ENCODE measurements at regions of chr13 and their contacts with region 1.

Region 1: DNA sequence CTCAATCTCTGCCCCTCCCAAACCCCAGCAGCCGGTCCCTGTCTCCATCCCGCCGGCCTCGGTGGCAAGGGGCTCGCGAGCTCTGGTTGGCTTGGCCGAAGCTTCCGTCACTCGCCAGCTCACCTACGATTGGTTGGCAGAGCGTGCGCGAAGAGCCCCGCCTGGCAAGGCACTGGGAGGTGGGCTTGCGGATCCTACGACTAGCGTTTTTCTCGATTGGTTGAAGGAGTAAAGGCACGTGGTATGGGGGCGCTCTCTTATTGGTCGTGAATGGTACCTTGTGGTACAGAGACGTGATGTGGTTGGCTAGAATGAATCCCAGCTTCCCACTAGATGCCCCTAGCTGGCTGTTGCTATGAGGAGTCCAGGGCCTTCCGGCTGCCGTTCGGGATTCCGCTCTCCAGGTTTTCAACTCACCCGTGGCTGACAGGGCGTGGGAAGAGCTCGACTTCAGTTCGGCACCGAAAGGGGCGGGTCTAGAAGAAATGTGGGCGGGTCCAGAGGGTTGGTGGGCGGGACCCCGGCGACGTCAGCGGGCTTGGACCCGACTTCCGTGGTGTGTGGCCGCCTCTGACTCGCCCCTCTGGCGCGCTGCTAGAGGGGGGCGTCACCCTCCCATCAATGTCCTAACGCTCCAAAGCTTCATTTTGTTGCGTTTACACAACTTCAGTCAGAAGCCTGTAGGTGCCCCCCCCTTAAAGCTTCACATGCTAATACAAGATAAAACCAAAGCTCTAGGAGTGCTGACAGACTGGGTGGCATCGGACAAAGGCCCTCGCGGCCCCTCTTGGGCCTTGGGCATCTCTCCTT is 847 bp upstream of the RAP2A start:
- DNase-seq: peak; percentile 99
- H3K4me3 ChIP-seq: peak overlapping the region; percentile 87 to 97
- H3K27ac ChIP-seq: peak overlapping the region; percentile 100
- H3K4me1 ChIP-seq: peaks cover 0 to 15% of the 10 kb centered on the region in 2 donors
- H3K27me3 ChIP-seq: no peaks in the 10 kb centered on the region
- CTCF ChIP-seq: no peak

Region 2: DNA sequence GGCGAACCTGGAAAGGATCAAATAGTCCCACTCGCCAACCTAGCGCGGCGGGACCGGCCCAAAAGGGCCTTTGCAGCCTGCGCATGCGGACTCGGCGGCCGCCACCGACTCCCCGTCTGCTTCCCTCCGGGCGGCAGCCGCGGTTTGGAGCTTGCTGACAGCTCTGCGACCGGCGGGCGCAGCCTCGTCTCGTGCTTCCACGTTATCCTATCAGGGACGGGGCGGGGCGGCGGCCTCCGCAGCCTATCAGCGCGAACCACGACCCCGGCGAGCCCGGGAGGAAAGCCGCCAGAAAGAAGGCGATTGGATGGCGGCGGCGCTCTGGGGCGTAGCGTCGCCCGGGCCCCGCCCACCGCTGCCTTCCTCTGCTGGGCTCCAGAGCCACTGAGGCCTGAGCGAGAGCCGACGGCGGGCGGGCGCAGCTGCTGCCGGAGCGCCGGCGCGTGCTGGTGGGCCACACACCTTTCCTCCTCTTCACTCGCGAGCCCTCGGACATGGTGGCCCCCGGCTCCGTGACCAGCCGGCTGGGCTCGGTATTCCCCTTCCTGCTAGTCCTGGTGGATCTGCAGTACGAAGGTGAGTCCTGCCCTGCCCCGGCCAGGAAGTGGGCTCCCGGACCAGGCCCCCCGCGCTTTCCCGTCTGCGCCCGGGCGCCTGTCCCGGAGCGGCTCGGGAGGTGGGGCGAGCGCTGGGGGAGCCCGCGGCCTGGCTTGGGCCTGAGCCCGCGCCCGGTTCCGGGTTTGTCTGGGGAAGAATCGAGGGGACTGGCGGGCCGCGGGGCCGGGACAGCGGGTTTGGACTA is 1756.2 kb before region 1 on chr13 and contains the start of gene DNAJC3:
- intact Hi-C with region 1: loop called (anchors 2 kb)
- DNase-seq: peak; percentile 95 to 99
- H3K4me3 ChIP-seq: peak within 1 kb of the TSS; percentile 72 to 81
- H3K27ac ChIP-seq: peak within 1 kb of the TSS; percentile 98 to 99
- H3K4me1 ChIP-seq: peaks cover 0 to 20% of the 10 kb centered on the region in 2 donors
- H3K27me3 ChIP-seq: no peaks in the 10 kb centered on the region
- CTCF ChIP-seq: no peak
- total RNA-seq, gene DNAJC3: 44.3 TPM

Region 3: GRCh38 chr13:96880419-96880818 is 552.7 kb before region 1 on chr13:
- intact Hi-C with region 1: no loop called
- DNase-seq: no peak
- H3K4me3 ChIP-seq: no peak overlapping the region
- H3K27ac ChIP-seq: no peak overlapping the region
- H3K4me1 ChIP-seq: no peaks in the 10 kb centered on the region
- H3K27me3 ChIP-seq: no peaks in the 10 kb centered on the region
- CTCF ChIP-seq: no peak

Region 4: DNA sequence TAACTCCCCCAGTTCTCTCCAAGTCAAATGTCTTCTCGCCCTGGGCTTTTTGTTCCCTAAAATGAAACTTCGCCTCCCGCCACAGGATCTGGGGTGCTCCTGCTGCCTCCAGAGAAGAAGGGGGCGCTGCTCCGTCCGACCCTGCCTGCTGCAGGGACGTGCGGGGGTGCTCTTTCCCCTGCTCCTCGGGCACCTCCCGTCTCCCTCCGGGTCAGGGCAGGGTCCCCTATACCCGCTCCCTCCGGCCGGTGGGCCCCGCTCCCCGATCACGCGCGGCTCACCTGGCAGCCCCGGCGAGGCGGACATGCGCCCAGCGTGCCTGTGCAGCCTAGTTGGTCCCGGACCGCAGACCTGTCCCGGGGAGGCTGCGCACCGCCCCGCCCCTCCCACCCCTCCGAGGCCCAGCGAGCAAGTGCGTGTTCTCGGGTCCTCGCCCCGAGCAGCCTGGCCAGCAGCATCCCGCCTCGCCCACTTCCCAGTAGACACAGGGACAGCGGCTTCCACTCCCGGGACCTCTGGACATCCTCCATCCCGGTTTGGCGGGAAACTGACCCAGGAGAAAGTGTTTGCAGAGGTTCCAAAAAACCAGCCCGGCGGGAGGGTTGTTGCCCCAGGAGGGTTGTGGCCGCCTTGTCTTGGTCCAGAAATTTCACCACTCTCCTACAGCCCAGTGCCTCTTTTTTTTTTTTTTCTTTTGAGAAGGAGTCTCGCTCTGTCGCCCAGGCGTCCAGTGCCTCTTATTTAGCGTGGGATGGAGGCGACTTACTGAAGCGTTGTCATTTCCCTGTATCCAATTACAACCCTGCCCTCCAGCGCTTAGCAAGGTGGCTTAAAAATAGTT is 438.9 kb before region 1 on chr13 and contains the start of gene OXGR1:
- intact Hi-C with region 1: no loop called
- DNase-seq: no peak
- H3K4me3 ChIP-seq: peak within 1 kb of the TSS; percentile 54 to 58
- H3K27ac ChIP-seq: no peak within 1 kb of the TSS
- H3K4me1 ChIP-seq: peaks cover 3 to 4% of the 10 kb centered on the region in 2 donors
- H3K27me3 ChIP-seq: no peaks in the 10 kb centered on the region
- CTCF ChIP-seq: no peak
- total RNA-seq, gene OXGR1: not detected

Region 5: DNA sequence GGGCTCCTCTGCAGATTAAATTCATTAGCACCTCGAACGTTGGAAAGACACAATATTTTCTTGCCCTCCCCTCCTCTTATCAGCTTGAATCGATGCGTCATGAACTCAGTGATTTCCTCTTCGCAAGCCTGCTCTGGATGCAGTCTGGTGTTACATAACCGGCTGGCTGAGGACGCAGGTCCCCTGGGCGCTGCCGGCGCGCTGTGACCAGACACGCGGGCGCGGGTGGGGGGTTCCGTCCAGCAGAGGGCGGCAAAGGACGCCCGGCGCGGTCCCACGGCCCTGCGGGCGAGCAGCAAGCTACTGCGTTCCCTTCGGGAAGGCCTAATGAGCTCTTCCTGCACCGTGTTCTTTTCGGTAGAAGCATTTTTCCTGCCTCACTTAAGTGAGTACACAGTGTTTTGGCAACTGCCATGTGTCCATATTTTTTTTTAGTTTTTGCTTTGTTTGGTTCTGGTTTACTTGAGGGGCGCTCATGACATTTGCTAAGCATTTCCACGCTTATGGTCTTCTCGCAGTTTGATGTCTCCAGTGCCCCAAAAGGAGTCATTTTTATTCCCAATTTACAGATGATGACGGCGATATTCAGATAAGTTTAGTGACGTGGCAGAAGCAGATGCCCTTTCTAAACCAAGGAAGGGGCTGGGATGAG is 323.2 kb before region 1 on chr13:
- intact Hi-C with region 1: loop called (anchors 2 kb)
- DNase-seq: peak; percentile 66 to 96
- H3K4me3 ChIP-seq: peak overlapping the region in 1 of 2 donors; percentile 42
- H3K27ac ChIP-seq: peak overlapping the region; percentile 63 to 69
- H3K4me1 ChIP-seq: peaks cover 8 to 70% of the 10 kb centered on the region in 2 donors
- H3K27me3 ChIP-seq: no peaks in the 10 kb centered on the region
- CTCF ChIP-seq: peak; percentile 95 to 97 (median 96)

Region 6: DNA sequence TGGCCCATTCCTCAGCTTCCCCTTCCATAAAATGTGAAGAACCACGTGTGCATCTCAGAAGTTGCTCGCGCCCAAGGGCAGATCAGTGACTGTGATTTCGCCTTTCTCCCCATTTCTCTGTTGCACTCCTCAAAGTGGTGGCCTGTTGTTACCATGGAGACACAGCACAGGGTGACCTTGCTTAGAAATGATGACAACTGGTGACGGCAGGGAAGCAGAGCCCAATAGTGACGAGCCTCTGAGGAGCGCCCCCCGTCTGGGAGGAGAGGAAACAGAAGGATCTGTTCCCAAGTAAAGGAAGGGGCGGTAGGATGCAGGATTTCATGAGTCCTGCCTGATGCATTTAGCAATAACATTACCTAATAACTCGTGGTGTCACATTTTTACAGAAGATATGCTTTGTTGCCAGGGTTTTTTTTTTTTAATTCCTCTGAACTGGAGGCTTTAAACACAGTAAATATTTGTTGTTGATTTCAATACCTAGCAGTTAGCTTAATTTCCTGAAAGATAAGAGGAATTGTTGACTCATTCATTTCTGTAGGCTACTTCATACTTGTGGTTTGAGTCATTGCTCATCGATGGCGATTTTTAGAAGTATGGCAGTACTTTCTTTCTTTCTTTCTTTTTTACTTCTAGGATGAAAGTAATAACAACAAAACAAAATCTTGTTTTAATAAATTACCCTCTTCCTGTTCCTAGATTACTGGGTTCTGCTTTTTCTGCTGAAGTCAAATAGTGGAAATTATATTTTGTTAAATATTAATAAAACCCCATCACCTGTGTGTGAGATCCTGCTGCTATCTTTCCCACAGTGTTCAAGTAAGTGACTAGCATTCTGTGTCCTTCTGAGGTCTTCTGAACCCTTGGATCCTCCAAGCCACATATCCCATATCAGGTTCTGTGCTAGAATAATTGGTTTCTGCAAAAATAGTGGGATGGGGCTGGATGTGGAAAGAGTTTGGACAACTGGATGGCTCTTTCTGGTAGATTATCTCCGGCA is 175.0 kb before region 1 on chr13:
- intact Hi-C with region 1: loop called (anchors 10 kb)
- DNase-seq: peak; percentile 18 to 87
- H3K4me3 ChIP-seq: no peak overlapping the region
- H3K27ac ChIP-seq: peak overlapping the region; percentile 76 to 79
- H3K4me1 ChIP-seq: peaks cover 12 to 72% of the 10 kb centered on the region in 2 donors
- H3K27me3 ChIP-seq: no peaks in the 10 kb centered on the region
- CTCF ChIP-seq: no peak

Region 7: GRCh38 chr13:97781891-97782305 is 348.8 kb after region 1 on chr13:
- intact Hi-C with region 1: loop called (anchors 5 kb)
- DNase-seq: peak; percentile 16 to 84
- H3K4me3 ChIP-seq: no peak overlapping the region
- H3K27ac ChIP-seq: peak overlapping the region; percentile 74 to 87
- H3K4me1 ChIP-seq: peaks cover 0 to 17% of the 10 kb centered on the region in 2 donors
- H3K27me3 ChIP-seq: no peaks in the 10 kb centered on the region
- CTCF ChIP-seq: no peak

Region 8: DNA sequence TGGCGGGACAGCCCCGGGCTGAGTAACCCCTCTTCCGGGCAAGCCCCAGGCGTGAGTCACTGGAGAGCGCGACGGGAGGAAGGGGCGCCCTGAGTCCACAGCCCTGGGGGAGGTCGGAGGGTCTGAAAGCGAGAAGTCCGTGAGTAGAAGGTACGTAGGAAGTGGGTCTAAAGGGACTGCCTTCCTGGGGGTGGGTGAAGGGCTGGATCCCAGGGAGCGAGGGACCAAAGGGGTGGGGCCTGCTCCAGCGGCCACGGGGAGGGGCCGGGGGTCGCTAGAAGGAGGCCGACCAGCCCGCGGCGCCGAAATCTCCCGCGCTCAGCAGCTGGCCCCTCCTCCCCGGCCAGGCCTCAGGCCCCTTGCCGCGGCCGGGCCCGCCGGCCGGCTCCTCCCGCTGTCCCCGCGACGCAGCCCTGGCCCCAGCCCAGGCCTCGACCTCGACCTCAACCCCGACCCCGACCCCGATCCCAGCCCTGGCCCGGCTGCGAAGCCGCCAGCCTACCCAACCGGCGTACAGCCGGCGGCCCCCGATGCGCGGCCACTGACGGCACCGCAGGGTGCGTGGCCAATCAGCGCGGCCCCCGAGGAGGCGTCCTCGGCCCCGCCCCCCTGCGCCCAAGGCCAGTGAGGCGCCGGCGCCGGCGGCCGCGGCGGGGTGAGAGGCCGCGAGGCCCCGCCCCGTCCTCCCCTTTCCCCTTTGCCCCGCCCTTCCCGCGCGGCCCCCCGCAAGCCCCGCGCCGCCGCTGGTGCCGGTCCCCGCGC is 542.9 kb after region 1 on chr13:
- intact Hi-C with region 1: loop called (anchors 2 kb)
- DNase-seq: peak; percentile 58 to 94
- H3K4me3 ChIP-seq: peak overlapping the region; percentile 64 to 80
- H3K27ac ChIP-seq: peak overlapping the region; percentile 92 to 99
- H3K4me1 ChIP-seq: peaks cover 0 to 16% of the 10 kb centered on the region in 2 donors
- H3K27me3 ChIP-seq: no peaks in the 10 kb centered on the region
- CTCF ChIP-seq: no peak

Region 9: GRCh38 chr13:99200432-99201167 is 1767.5 kb after region 1 on chr13 and contains the start of gene UBAC2:
- intact Hi-C with region 1: loop called (anchors 5 kb)
- DNase-seq: peak; percentile 79 to 97
- H3K4me3 ChIP-seq: peak within 1 kb of the TSS; percentile 82 to 96
- H3K27ac ChIP-seq: peak within 1 kb of the TSS; percentile 98
- H3K4me1 ChIP-seq: peaks cover 0 to 6% of the 10 kb centered on the region in 2 donors
- H3K27me3 ChIP-seq: no peaks in the 10 kb centered on the region
- CTCF ChIP-seq: no peak
- total RNA-seq, gene UBAC2: 67.8 TPM